OCI-LY7 (cell line): ENCODE measurements at regions of chr20 and their contacts with region 1.

Region 1: DNA sequence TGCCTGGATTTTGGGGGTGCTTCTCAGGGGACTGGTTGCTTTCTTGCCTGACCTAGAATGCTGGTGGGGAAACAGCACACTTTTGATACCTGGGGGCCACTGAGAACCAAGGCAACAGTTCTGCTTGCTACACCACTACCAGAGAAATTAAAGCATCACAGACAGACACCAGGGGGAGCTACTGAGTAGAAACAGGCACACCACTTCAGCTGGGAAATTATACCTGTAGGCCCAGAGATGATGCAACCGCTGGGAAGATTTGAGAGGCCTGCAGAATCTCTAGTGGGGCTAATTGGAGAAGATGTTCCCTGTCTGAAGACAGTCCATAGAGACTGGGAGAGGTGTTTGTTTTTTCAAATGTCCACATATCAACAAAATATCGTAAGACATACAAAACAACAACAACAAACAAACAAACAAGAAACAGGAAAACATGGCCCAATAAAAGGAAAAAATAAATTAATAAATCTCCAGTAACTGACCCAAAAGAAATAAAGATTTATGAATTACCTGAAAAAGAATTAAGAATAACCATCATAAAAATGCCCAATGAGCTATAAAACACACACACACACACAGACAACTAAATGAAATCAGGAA is 129.4 kb upstream of the RIN2 start:
- DNase-seq: peak; percentile 65
- H3K4me3 ChIP-seq: no peak overlapping the region
- H3K27ac ChIP-seq: no peak overlapping the region
- H3K4me1 ChIP-seq: no peaks in the 10 kb centered on the region
- CTCF ChIP-seq: peak; percentile 83

Region 2: GRCh38 chr20:19802492-19803158 is 174.0 kb after region 1 on chr20:
- CTCF ChIA-PET with region 1: no interaction called
- POLR2A ChIA-PET with region 1: no interaction called
- intact Hi-C with region 1: loop called (anchors 5 kb)
- DNase-seq: no peak
- H3K4me3 ChIP-seq: no peak overlapping the region
- H3K27ac ChIP-seq: no peak overlapping the region
- H3K4me1 ChIP-seq: no peaks in the 10 kb centered on the region
- CTCF ChIP-seq: peak; percentile 51